GM10248 (cell line): ENCODE measurements at regions of chr10 and their contacts with region 1.

Region 1: GRCh38 chr10:62594093-62594520 is 210.4 kb upstream of the ADO start:
- DNase-seq: peak; percentile 54
- CTCF ChIP-seq: peak; percentile 98

Region 2: GRCh38 chr10:62577666-62578291 is 16.3 kb before region 1 on chr10:
- CTCF ChIA-PET with region 1: interaction called, 18 read pairs
- POLR2A ChIA-PET with region 1: no interaction called
- DNase-seq: no peak
- CTCF ChIP-seq: no peak

Region 3: GRCh38 chr10:62582804-62583208 is 11.3 kb before region 1 on chr10:
- CTCF ChIA-PET with region 1: interaction called, 18 read pairs
- POLR2A ChIA-PET with region 1: no interaction called
- DNase-seq: no peak
- CTCF ChIP-seq: no peak